ENCODE measurements at regions of chr17 and their contacts with region 1.

Region 1: GRCh38 chr17:46212634-46213435 is 19.6 kb upstream of the KANSL1 start:
- DNase-seq: peak; percentile 63 to 65
- H3K4me3 ChIP-seq: no peak overlapping the region
- H3K4me3 Mint-ChIP-seq: no peak overlapping the region
- H3K27ac Mint-ChIP-seq: no peak overlapping the region
- H3K4me1 ChIP-seq: no peaks in the 10 kb centered on the region
- H3K4me1 Mint-ChIP-seq: peaks cover 9% of the 10 kb centered on the region
- H3K27me3 ChIP-seq: no peaks in the 10 kb centered on the region
- H3K27me3 Mint-ChIP-seq: no peaks in the 10 kb centered on the region
- CTCF ChIP-seq: peak; percentile 69 to 72

Region 2: DNA sequence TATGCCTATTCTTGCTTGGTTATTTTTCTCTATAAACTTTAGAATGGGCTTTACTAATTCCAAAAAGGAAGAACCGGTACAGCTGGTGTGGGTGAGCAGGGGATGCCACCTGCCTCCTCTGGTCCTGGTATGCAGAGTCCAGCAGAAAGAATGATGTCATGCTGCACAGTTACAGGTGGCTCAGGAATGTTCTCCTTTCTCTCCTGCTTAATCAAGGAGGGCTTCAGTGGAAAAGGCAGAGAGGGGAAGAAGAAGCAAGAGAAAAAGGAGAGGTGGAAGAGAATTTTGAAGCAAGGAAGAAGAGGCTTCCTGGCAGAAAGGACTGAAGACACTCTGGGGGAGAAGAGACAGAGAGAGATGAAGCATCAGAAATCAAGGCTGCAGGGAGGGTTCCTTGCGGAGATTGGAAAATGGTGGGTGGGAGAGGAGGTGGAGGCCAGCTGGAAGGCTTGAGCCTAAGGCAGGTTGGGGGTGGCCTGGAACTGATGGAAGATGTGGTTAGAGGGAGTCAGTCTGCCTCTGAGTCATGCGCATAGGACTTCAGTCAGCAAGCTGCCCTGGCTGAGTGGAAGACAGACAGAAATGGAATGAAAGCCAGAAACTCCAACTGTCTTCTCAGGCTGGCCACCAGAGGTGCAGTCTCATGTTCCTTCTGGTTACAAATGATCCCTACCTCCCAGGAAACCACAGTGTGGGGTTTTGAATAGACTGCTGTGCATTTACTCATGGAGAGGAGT is 493.3 kb before region 1 on chr17:
- CTCF ChIA-PET with region 1: no interaction called
- POLR2A ChIA-PET with region 1: no interaction called
- intact Hi-C with region 1: no loop called
- DNase-seq: peak in 1 of 2 experiments; percentile 46
- H3K4me3 ChIP-seq: no peak overlapping the region
- H3K4me3 Mint-ChIP-seq: no peak overlapping the region
- H3K27ac Mint-ChIP-seq: no peak overlapping the region
- H3K4me1 ChIP-seq: 0 out of 2 replicates have a peak, but pooled peaks cover 4% of the 10 kb centered on the region
- H3K4me1 Mint-ChIP-seq: no peaks in the 10 kb centered on the region
- H3K27me3 ChIP-seq: no peaks in the 10 kb centered on the region
- H3K27me3 Mint-ChIP-seq: peaks cover 25% of the 10 kb centered on the region
- CTCF ChIP-seq: peak; percentile 35 to 65

Region 3: DNA sequence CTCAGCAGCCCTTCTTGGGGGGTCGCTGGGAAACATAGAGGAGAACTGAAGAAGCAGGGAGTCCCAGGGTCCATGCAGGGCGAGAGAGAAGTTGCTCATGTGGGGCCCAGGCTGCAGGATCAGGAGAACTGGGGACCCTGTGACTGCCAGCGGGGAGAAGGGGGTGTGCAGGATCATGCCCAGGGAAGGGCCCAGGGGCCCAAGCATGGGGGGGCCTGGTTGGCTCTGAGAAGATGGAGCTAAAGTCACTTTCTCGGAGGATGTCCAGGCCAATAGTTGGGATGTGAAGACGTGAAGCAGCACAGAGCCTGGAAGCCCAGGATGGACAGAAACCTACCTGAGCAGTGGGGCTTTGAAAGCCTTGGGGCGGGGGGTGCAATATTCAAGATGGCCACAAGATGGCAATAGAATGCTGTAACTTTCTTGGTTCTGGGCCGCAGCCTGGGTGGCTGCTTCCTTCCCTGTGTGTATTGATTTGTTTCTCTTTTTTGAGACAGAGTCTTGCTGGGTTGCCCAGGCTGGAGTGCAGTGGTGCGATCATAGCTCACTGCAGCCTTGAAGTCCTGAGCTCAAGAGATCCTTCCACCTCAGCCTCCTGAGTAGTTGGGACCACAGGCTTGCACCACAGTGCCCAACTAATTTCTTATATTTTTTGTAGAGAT is 210.4 kb before region 1 on chr17:
- CTCF ChIA-PET with region 1: interaction called, 18 read pairs
- POLR2A ChIA-PET with region 1: no interaction called
- intact Hi-C with region 1: loop called (anchors 1 kb)
- DNase-seq: peak; percentile 73 to 84
- H3K4me3 ChIP-seq: no peak overlapping the region
- H3K4me3 Mint-ChIP-seq: no peak overlapping the region
- H3K27ac Mint-ChIP-seq: no peak overlapping the region
- H3K4me1 ChIP-seq: no peaks in the 10 kb centered on the region
- H3K4me1 Mint-ChIP-seq: peaks cover 6% of the 10 kb centered on the region
- H3K27me3 ChIP-seq: no peaks in the 10 kb centered on the region
- H3K27me3 Mint-ChIP-seq: no peaks in the 10 kb centered on the region
- CTCF ChIP-seq: peak; percentile 87 to 97

Region 4: DNA sequence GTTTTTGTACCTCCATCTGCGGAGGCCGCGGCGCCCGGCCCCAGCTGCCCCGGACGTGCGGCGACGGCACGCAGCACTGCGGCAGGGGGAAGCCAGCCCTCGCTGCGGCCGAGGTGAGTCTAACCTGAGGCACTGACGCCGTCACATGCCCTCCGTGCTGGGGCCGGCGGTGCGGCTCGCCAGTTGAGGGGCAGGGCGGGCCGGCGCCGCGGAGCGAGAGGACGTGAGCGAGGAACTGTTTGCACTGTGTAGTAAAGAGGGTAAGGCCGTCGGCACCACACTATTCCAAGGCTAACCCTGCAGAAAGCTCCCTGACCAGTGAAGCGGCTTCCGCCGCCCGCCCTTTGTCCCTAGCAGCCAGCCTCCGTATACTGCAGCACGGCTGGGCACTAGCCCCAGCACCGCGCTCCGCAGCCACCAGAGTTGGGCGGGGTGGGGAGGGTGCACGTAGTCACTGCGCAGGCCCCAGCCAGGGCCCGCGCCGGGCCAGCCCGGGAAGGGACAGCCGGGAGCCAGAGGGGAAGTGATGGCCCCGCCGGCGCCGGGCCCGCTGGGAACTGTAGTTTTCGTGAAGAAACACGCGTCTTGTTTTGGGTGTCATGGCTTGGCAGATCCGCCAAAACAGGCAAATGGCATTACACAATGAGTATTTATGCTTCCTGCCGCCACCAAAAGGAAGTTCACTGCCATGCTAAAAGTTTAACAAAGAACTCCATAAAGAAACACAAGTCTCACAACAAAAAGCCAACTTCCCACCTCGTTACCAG is 19.0 kb before region 1 on chr17:
- CTCF ChIA-PET with region 1: interaction called, 47 read pairs
- POLR2A ChIA-PET with region 1: interaction called, 3 read pairs
- intact Hi-C with region 1: loop called (anchors 1 kb)
- DNase-seq: peak; percentile 93 to 94
- H3K4me3 ChIP-seq: peak overlapping the region; percentile 97
- H3K4me3 Mint-ChIP-seq: peak overlapping the region; percentile 98
- H3K27ac Mint-ChIP-seq: peak overlapping the region; percentile 23
- H3K4me1 ChIP-seq: peaks cover 27% of the 10 kb centered on the region
- H3K4me1 Mint-ChIP-seq: peaks cover 21% of the 10 kb centered on the region
- H3K27me3 ChIP-seq: no peaks in the 10 kb centered on the region
- H3K27me3 Mint-ChIP-seq: no peaks in the 10 kb centered on the region
- CTCF ChIP-seq: no peak

Region 5: GRCh38 chr17:46202424-46202823 is 10.4 kb before region 1 on chr17:
- CTCF ChIA-PET with region 1: interaction called, 10 read pairs
- POLR2A ChIA-PET with region 1: interaction called, 13 read pairs
- intact Hi-C with region 1: no loop called
- DNase-seq: no peak
- H3K4me3 ChIP-seq: no peak overlapping the region
- H3K4me3 Mint-ChIP-seq: peak overlapping the region; percentile 41
- H3K27ac Mint-ChIP-seq: peak overlapping the region; percentile 25
- H3K4me1 ChIP-seq: peaks cover 43% of the 10 kb centered on the region
- H3K4me1 Mint-ChIP-seq: peaks cover 14% of the 10 kb centered on the region
- H3K27me3 ChIP-seq: no peaks in the 10 kb centered on the region; the same call in 1 of the 2 replicates
- H3K27me3 Mint-ChIP-seq: no peaks in the 10 kb centered on the region
- CTCF ChIP-seq: no peak

Region 6: DNA sequence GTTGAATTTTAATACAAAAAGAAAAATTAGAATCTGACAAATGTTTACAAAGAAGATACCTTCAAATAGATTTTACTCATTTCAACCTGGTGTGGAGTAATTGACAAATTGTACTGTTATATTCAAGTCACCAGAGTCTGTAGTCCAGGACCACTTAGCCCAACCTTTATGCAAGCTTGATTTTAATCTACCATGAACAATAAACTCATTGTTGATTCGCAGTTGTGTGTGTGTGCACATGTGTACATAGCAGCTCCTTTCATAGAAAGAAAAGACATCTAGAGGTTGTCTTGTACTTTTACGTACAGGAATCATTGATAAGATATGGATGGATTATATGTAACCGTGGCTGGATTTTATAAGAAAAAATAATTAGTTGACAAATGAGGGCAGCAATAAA is 61.4 kb after region 1 on chr17:
- CTCF ChIA-PET with region 1: no interaction called
- POLR2A ChIA-PET with region 1: no interaction called
- intact Hi-C with region 1: no loop called
- DNase-seq: no peak
- H3K4me3 ChIP-seq: no peak overlapping the region
- H3K4me3 Mint-ChIP-seq: no peak overlapping the region
- H3K27ac Mint-ChIP-seq: no peak overlapping the region
- H3K4me1 ChIP-seq: peaks cover 5% of the 10 kb centered on the region; the same call in 1 of the 2 replicates
- H3K4me1 Mint-ChIP-seq: peaks cover 6% of the 10 kb centered on the region
- H3K27me3 ChIP-seq: no peaks in the 10 kb centered on the region
- H3K27me3 Mint-ChIP-seq: no peaks in the 10 kb centered on the region
- CTCF ChIP-seq: no peak

Measured in Caco-2 (cell line).